Sciatic nerve (tissue), 2 donors: ENCODE measurements at regions of chr9 and their contacts with region 1.

Region 1: GRCh38 chr9:1960342-1961042 is 54.7 kb upstream of the SMARCA2 start:
- DNase-seq: no peak
- ATAC-seq: no peak

Region 2: GRCh38 chr9:959914-960313 is 1000.6 kb before region 1 on chr9:
- intact Hi-C with region 1: loop called (anchors 10 kb)
- DNase-seq: no peak
- ATAC-seq: no peak

Region 3: DNA sequence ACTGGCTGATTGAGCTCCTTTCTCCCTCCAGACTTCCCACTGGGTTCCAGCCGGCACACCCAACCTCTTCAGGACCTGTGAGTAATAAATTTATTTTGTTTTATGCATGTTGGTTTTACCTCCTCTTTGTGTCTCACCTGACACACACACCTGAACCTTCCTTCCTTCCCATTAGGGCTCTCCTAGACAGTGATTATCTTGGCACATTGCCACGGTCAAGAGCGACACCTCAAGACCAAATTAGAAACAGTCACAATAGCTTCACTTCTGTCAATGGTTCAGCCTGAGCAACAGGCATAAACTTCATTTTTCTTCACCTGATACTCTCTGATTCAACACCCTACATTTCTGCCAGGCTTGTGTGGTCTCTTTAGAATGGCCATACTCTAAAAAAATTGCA is 241.7 kb before region 1 on chr9:
- intact Hi-C with region 1: loop called (anchors 10 kb)
- DNase-seq: no peak
- ATAC-seq: no peak

Region 4: GRCh38 chr9:1869843-1870242 is 90.6 kb before region 1 on chr9:
- intact Hi-C with region 1: no loop called
- DNase-seq: no peak
- ATAC-seq: no peak